ENCODE measurements at regions of chr12 and their contacts with region 1.

Region 1: GRCh38 chr12:42482445-42483237 is 106.9 kb downstream of the PRICKLE1 start:
- DNase-seq: peak; percentile 32
- H3K4me3 Mint-ChIP-seq: peak overlapping the region; percentile 77
- H3K27ac Mint-ChIP-seq: no peak overlapping the region
- H3K4me1 Mint-ChIP-seq: peaks cover 12% of the 10 kb centered on the region
- H3K27me3 Mint-ChIP-seq: peaks cover 82% of the 10 kb centered on the region

Region 2: DNA sequence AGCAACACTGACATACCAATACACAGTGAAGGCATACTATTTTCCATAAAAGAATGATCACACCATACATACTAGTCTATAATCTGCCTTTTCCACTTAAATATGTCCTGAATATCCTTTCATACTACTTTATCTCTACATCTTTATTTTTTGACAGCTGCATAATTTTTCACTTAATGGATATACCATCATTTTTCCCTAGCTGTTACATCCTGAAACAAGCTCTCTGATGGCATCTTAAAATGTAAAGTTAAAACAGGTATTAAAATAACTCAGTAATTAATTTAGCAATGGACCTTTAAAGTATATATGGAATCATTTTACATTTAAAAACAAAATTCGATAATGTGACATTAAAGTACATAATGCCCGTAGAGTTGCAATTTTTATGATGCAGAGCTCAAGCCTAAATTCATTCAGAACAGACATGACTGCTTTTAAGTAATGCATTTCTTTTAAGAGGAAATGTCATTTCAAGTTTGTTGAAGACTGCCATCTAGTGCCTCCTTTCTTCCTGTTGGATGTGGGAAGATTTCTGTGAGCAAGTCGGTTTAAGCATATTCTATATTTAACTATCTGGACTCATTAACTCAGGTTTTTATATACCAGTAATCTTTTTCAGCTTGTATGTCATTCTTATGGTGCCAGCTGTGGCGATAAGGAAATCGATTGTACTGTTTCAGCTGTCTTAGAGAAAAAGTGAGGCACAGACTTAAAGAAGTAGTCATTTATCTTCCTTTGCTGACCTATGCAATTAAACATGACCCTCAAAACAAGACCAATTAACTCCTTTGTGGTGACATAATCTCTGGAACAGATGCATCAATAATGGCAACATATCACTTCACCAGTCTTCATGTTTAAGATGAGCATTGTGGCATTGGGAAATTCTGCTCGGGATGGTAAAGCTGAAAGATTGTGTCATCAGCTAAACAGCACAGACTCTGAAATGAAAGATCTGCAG is 86.6 kb after region 1 on chr12:
- intact Hi-C with region 1: loop called (anchors 2 kb)
- DNase-seq: no peak
- H3K4me3 Mint-ChIP-seq: no peak overlapping the region
- H3K27ac Mint-ChIP-seq: no peak overlapping the region
- H3K4me1 Mint-ChIP-seq: no peaks in the 10 kb centered on the region
- H3K27me3 Mint-ChIP-seq: no peaks in the 10 kb centered on the region

Region 3: DNA sequence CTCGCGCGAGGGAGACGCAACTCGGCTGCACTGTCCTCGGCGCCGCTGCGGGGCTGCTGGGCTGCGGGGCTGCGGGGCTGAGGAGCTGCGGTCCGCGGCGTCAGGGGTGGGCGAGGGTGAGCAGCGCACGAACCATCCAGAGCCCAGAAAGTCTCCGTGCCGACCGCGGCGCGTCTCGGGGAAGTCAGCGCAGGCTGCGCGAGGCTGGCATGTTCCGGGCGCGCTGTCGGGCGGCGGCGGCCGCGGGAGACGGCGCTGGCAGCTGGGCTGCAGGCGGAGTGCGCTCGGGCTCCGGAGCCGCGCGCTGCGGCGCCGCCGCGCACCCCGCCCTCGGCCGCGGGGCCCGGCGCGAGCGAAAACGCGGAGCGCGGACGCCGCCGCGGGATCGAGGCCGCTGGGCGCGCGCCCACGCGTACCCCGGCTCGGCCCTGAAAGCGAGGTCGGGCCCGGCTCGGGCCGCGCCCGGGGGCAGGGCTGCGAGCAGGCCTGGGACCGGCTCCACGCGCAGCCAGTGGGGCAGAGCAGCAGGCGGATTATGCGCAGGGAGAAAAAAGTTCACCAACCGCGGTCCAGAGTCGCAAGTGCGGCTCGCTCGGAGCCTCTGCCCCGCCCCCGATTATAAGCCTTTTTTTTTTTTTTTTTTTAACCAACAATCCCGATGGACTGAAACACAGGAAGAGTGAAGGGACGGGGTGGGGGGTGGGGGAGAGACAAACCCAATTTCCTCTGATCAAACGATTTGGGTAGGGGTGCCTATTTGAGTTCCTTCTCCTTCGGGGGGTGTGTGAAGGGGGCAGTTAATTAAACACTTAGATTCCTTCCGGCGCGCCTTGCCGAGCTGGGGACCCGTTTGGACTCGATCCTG is 107.1 kb after region 1 on chr12 and contains the start of gene PRICKLE1:
- intact Hi-C with region 1: loop called (anchors 5 kb)
- DNase-seq: peak; percentile 14
- H3K4me3 Mint-ChIP-seq: peak within 1 kb of the TSS; percentile 68
- H3K27ac Mint-ChIP-seq: no peak within 1 kb of the TSS
- H3K4me1 Mint-ChIP-seq: peaks cover 9% of the 10 kb centered on the region
- H3K27me3 Mint-ChIP-seq: peaks cover 54% of the 10 kb centered on the region
- total RNA-seq, gene PRICKLE1: 0.05 TPM in 1 of 2 replicates, not detected in the other

Region 4: DNA sequence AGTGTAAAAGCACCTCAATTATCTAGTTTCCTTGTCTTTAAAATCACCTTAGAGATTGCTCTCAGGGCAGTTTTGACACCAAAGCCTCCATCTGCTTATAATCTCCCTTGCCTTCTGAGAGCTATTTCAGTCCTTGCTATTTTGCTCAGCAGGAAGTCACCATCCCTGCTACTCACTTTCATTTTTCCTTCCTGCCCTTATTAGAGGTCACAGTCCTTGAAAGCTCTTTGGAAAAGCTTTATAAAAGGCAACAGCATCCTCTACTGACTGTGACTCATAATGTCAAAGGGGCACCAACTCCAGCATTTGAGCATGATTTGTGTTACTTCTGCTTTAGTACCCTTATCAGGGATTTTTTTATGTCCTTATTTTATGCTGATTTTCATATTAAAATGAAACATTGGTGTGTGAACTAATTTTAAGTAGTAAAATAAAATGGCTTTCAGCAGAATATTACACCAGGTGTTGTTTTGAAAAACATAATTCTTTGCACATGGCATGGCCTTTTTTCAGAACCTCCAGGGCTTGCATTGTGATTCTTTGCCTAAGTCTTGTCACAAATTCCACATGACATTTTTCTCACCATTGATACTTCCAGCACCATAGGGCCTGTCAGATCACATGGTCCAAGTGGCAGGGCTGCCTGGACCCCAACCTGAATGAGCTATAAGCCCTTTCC is 856.3 kb after region 1 on chr12:
- intact Hi-C with region 1: loop called (anchors 2 kb)
- DNase-seq: no peak
- H3K4me3 Mint-ChIP-seq: no peak overlapping the region
- H3K27ac Mint-ChIP-seq: no peak overlapping the region
- H3K4me1 Mint-ChIP-seq: peaks cover 5% of the 10 kb centered on the region
- H3K27me3 Mint-ChIP-seq: no peaks in the 10 kb centered on the region